ENCODE measurements at regions of chr3 and their contacts with region 1.

Region 1: GRCh38 chr3:148955544-148956346 is 35.6 kb upstream of the GYG1 start:
- DNase-seq: peak in 3 of 5 donors; percentile 34 to 54 (median 53)
- ATAC-seq: peak; percentile 75 to 92 (median 90)
- H3K4me3 ChIP-seq: no peak overlapping the region
- H3K27ac ChIP-seq: peak overlapping the region; percentile 45 to 87 (median 70)
- H3K4me1 ChIP-seq: peaks cover 0 to 11% (median 2%) of the 10 kb centered on the region in 12 donors
- H3K27me3 ChIP-seq: no peaks in the 10 kb centered on the region
- CTCF ChIP-seq: peak; percentile 40 to 74 (median 64)
- POLR2A ChIP-seq: no peak

Region 2: DNA sequence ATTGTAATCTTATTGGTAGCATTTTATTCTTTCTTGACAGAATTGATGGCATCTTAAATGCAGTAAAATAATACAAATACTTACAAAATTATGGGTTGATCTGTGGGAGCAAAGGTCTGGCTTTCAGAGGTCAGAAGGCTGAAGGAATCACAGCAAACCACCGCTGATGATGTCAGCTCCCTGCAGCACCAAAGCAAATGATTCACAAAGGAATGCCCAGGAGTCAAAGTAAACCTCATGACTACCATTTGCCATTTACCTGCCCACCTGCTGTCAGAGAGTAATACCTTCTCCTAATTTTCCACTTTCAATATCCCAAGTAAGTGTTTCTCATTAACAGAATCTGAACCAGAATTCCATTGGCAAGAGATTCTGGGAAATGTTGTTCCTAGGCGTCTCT is 44.6 kb before region 1 on chr3:
- intact Hi-C with region 1: no loop called
- DNase-seq: no peak
- ATAC-seq: no peak
- H3K4me3 ChIP-seq: no peak overlapping the region
- H3K27ac ChIP-seq: no peak overlapping the region
- H3K4me1 ChIP-seq: no peaks in the 10 kb centered on the region
- H3K27me3 ChIP-seq: peaks cover 0 to 10% (median 0%) of the 10 kb centered on the region in 9 donors
- CTCF ChIP-seq: no peak
- POLR2A ChIP-seq: no peak

Region 3: DNA sequence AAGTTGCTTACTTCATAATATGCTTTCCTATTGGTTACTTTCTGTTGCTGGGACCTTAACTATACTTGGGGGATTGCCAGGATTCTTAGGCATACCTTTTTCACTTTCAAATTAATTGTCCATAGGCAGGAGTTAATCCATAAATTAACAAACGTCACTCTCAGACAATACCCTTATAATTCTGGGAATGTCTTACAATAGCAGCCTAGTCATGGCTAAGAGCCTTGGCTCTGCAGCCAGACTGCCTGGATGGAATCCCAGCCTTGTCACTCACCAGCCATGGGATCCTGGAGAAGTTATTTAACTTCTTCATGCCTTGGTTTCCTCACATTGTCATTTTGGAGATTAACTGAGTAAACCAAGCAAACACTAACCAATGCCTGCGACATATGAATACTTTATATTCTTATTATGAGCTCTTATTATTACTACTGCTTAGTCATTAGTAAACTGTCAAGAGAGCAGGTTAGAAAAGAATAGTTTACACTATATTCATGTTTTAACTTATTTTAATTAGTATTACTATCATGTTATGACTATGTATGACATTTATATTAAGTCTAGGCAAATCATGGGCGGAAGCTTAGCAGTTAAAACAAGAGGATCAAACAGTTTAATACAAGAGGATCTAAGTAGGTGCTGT is 64.6 kb after region 1 on chr3:
- intact Hi-C with region 1: loop called in 3 of 10 experiments (anchors 5 to 10 kb)
- DNase-seq: peak in 1 of 5 donors; percentile 42
- ATAC-seq: peak in 3 of 4 donors; percentile 50 to 59 (median 56)
- H3K4me3 ChIP-seq: no peak overlapping the region
- H3K27ac ChIP-seq: peak overlapping the region in 9 of 12 donors; percentile 0 to 70 (median 55)
- H3K4me1 ChIP-seq: peaks cover 7 to 55% (median 30%) of the 10 kb centered on the region in 12 donors
- H3K27me3 ChIP-seq: no peaks in the 10 kb centered on the region
- CTCF ChIP-seq: no peak
- POLR2A ChIP-seq: no peak

Region 4: GRCh38 chr3:149114458-149114857 is 158.7 kb after region 1 on chr3:
- intact Hi-C with region 1: loop called in 4 of 10 experiments (anchors 5 to 10 kb)
- DNase-seq: no peak
- ATAC-seq: peak in 1 of 4 donors; percentile 65
- H3K4me3 ChIP-seq: no peak overlapping the region
- H3K27ac ChIP-seq: no peak overlapping the region
- H3K4me1 ChIP-seq: peaks cover 0 to 10% (median 0%) of the 10 kb centered on the region in 12 donors
- H3K27me3 ChIP-seq: no peaks in the 10 kb centered on the region
- CTCF ChIP-seq: no peak
- POLR2A ChIP-seq: no peak

Region 5: DNA sequence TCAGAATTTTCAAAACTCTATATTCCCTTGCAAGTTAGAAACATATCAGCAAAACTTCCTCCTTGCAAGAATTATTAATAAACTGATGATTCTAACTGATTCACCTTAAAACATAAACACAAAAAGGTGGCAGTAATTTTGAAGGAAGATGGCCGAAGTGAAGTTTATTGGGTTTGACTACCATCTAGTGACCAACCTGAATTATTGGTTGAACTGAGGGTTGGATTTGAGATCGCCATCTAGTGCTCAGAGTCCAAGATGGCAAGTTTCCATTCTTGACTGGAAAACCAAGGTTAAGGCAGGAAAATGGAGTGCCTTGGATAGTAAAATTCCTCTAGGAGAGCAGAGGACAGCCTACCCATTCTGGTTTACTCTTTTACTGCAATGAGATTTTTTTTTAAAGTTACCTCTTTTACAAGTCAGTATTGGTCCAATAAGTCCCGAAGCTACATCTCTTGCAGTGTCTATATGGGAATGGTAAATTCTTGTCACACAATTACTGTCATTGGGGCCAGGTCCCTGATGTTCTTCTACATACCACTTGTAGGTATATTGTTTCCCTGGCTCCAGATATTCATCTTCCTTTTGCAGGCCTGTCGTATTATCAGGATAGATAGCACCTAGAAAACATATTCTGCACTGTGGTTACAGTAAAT is 317.5 kb after region 1 on chr3:
- intact Hi-C with region 1: loop called (anchors 1 to 5 kb)
- DNase-seq: peak in 2 of 5 donors; percentile 40 to 48
- ATAC-seq: peak; percentile 71 to 91 (median 82)
- H3K4me3 ChIP-seq: no peak overlapping the region
- H3K27ac ChIP-seq: peak overlapping the region in 3 of 12 donors; percentile 5 to 33 (median 32)
- H3K4me1 ChIP-seq: peaks cover 0 to 15% (median 3%) of the 10 kb centered on the region in 12 donors
- H3K27me3 ChIP-seq: no peaks in the 10 kb centered on the region
- CTCF ChIP-seq: peak; percentile 80 to 98 (median 96)
- POLR2A ChIP-seq: no peak